Kidney (tissue), 22 donors: ENCODE measurements at regions of chr19 and their contacts with region 1.

Region 1: GRCh38 chr19:39554701-39555311 is 14.8 kb upstream of the EID2 start:
- DNase-seq: no peak
- H3K4me3 ChIP-seq: no peak overlapping the region
- H3K27ac ChIP-seq: no peak overlapping the region
- H3K4me1 ChIP-seq: no peaks in the 10 kb centered on the region
- H3K27me3 ChIP-seq: no peaks in the 10 kb centered on the region
- CTCF ChIP-seq: no peak

Region 2: GRCh38 chr19:39671738-39672363 is 117.0 kb after region 1 on chr19:
- intact Hi-C with region 1: loop called (anchors 5 kb)
- DNase-seq: peak in 4 of 5 donors; percentile 35 to 82 (median 58)
- H3K4me3 ChIP-seq: no peak overlapping the region
- H3K27ac ChIP-seq: no peak overlapping the region
- H3K4me1 ChIP-seq: no peaks in the 10 kb centered on the region
- H3K27me3 ChIP-seq: no peaks in the 10 kb centered on the region
- CTCF ChIP-seq: peak; percentile 57

Region 3: DNA sequence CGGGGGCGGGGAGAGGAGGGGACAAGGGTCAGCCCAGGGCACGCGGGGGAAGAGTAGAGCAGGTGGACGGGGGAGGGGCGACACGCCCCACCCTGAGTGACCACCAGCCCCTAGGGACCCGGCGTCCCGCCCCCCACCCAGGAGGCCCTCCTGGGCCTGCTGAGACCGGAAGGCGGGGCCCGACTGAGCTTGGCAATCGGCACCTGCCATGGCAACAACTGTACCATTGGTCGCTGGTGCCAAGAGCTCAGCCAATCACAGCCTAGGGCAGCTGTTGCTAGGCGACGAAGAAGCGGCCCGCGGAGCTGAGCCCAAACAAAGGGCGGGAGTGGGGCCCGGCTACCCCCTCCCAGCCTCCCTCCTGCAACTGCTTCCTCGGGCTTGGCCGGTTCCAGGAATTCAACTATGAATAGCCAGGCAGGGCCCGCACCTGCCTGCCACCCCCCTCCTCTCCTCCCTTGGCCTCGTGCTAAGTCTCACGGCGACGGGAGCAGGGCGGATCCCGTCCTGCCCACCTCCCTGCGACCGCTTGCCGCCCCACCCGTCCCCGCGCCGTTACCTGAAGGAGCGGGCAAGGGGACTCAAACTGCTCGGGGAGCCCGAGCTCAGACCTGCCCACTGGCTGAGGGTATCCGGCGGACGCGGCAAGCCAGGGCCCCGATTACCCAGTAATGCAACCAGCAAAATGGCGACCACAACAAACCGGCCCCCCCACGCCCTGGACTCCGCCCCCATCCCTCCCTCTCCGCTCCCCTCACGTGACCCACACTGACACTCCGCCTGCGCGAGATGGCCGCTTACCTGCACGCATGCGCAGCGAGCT is 278.9 kb after region 1 on chr19 and contains the start of gene DYRK1B:
- intact Hi-C with region 1: no loop called
- DNase-seq: peak; percentile 99 to 100 (median 99)
- H3K4me3 ChIP-seq: peak within 1 kb of the TSS; percentile 76 to 94 (median 80)
- H3K27ac ChIP-seq: peak within 1 kb of the TSS; percentile 92 to 94
- H3K4me1 ChIP-seq: peaks cover 0 to 13% (median 7%) of the 10 kb centered on the region in 3 donors
- H3K27me3 ChIP-seq: no peaks in the 10 kb centered on the region
- CTCF ChIP-seq: no peak
- total RNA-seq, gene DYRK1B: 28.9 TPM